Activated CD4-positive, alpha-beta T cell treated with anti-CD3 and anti-CD28 coated beads for 36 hours (primary cell): ENCODE measurements at regions of chr15 and their contacts with region 1.

Region 1: DNA sequence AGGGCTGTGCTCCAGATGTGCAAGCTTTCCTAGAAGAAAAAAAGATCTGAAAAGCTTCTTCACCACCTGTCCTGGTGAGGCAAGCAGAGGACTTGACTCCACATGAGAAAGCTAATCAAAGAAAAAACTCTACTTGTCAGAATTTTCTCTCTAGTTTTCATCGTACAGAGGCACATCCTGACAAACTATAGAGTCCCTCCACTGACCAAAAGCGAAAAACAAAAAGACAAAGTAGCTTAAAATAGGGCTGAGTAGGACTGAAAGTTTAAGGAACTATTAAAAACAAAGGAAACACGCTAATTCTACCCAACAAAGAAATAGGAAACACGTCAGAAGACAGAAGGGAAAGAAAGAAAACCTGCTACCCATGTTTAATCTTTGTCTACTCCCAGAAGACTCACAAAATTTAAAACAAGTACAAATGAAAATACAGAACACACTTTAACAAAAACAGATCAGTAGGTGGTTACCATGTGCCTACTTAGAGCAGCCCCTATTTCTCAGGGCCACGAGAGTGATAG is 26.5 kb downstream of the NANOGP8 start:
- DNase-seq: no peak
- ATAC-seq: no peak
- H3K4me3 Mint-ChIP-seq: no peak overlapping the region
- H3K27ac Mint-ChIP-seq: no peak overlapping the region
- H3K4me1 Mint-ChIP-seq: no peaks in the 10 kb centered on the region
- H3K27me3 Mint-ChIP-seq: no peaks in the 10 kb centered on the region

Region 2: GRCh38 chr15:34969340-34970097 is 89.1 kb before region 1 on chr15 and contains the start of gene AQR:
- CTCF ChIA-PET with region 1: no interaction called
- POLR2A ChIA-PET with region 1: no interaction called
- intact Hi-C with region 1: no loop called
- DNase-seq: peak; percentile 95
- ATAC-seq: peak; percentile 99
- H3K4me3 Mint-ChIP-seq: peak within 1 kb of the TSS; percentile 98
- H3K27ac Mint-ChIP-seq: peak within 1 kb of the TSS; percentile 91
- H3K4me1 Mint-ChIP-seq: peaks cover 35% of the 10 kb centered on the region
- H3K27me3 Mint-ChIP-seq: no peaks in the 10 kb centered on the region
- total RNA-seq, gene AQR: 39.2 to 62.0 TPM

Region 3: GRCh38 chr15:34987985-34988873 is 70.4 kb before region 1 on chr15 and contains the start of gene ZNF770:
- CTCF ChIA-PET with region 1: no interaction called
- POLR2A ChIA-PET with region 1: no interaction called
- intact Hi-C with region 1: no loop called
- DNase-seq: peak; percentile 88
- ATAC-seq: peak; percentile 87
- H3K4me3 Mint-ChIP-seq: peak within 1 kb of the TSS; percentile 97
- H3K27ac Mint-ChIP-seq: peak within 1 kb of the TSS; percentile 98
- H3K4me1 Mint-ChIP-seq: peaks cover 35% of the 10 kb centered on the region
- H3K27me3 Mint-ChIP-seq: no peaks in the 10 kb centered on the region
- total RNA-seq, gene ZNF770: 64.1 to 65.1 TPM

Region 4: DNA sequence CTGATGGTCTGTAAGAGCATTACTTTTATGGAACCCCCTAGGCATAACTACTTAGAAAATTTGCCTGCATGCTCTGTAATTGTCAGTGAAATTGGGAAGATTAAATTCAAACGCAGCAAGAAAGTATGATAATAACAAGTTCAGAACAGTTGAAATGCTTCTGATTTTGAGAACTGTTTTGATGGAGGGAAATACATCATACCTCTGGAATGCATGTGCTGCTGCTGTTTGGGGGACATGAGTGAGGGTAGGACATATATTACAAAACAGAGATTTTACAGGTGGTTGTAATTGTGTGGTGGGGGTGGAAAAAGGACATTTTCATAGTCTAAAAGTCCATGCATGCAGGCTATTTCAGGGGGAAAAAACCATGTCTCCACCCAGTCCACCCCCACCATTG is 622.4 kb after region 1 on chr15:
- CTCF ChIA-PET with region 1: no interaction called
- POLR2A ChIA-PET with region 1: no interaction called
- intact Hi-C with region 1: loop called in 1 of 2 experiments (anchors 5 kb)
- DNase-seq: no peak
- ATAC-seq: no peak
- H3K4me3 Mint-ChIP-seq: no peak overlapping the region
- H3K27ac Mint-ChIP-seq: no peak overlapping the region
- H3K4me1 Mint-ChIP-seq: no peaks in the 10 kb centered on the region
- H3K27me3 Mint-ChIP-seq: peaks cover 11% of the 10 kb centered on the region